Mammary epithelial cell (primary cell): ENCODE measurements at regions of chr2 and their contacts with region 1.

Region 1: DNA sequence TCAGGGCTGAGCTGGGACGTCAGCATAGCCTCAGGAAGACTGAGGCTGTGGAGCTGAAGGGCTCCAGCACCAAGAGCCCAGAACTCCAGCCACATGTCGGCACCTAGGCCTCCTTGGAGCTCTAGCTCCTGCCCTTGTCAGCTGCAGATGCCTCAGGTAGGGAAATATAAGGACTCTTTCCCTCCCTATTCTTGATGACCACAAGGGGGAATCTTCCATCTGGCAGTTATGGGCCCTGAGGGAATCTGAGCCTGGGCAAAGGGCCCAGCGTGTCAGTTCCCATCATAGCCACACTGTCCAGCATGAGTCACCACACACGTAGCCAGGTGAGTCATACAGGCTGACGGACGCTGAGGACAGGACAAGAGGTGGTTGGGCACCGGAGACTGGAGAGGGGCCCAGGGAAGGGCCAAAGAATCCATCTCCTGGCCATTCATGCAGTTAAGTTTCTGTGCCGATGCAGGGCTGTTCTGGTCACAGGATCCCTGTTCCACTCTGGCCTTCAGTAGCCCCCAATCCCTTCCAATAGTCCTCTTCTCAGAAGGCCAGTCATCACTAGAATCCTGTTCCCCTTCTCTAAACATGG is 1.8 kb downstream of the MPV17 start:
- DNase-seq: peak; percentile 98
- H3K4me3 ChIP-seq: peak overlapping the region in 2 of 3 experiments; percentile 27 to 80
- H3K27ac ChIP-seq: peak overlapping the region; percentile 94
- H3K4me1 ChIP-seq: peaks cover 21% of the 10 kb centered on the region
- H3K27me3 ChIP-seq: no peaks in the 10 kb centered on the region
- CTCF ChIP-seq: peak; percentile 58 to 81

Region 2: DNA sequence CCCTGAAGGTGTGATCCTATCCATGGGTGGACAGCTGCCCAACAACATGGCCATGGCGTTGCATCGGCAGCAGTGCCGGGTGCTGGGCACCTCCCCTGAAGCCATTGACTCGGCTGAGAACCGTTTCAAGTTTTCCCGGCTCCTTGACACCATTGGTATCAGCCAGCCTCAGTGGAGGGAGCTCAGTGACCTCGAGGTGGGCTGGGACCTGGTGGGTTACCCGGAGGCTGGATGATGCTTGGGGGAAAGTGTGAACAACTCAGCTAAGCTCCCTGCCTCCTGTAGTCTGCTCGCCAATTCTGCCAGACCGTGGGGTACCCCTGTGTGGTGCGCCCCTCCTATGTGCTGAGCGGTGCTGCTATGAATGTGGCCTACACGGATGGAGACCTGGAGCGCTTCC is 87.7 kb before region 1 on chr2:
- CTCF ChIA-PET with region 1: no interaction called
- dilution Hi-C with region 1: loop called (anchors 5 kb)
- in situ Hi-C with region 1: no loop called
- intact Hi-C with region 1: no loop called
- DNase-seq: no peak
- H3K4me3 ChIP-seq: no peak overlapping the region
- H3K27ac ChIP-seq: no peak overlapping the region
- H3K4me1 ChIP-seq: no peaks in the 10 kb centered on the region
- H3K27me3 ChIP-seq: no peaks in the 10 kb centered on the region
- CTCF ChIP-seq: no peak

Region 3: DNA sequence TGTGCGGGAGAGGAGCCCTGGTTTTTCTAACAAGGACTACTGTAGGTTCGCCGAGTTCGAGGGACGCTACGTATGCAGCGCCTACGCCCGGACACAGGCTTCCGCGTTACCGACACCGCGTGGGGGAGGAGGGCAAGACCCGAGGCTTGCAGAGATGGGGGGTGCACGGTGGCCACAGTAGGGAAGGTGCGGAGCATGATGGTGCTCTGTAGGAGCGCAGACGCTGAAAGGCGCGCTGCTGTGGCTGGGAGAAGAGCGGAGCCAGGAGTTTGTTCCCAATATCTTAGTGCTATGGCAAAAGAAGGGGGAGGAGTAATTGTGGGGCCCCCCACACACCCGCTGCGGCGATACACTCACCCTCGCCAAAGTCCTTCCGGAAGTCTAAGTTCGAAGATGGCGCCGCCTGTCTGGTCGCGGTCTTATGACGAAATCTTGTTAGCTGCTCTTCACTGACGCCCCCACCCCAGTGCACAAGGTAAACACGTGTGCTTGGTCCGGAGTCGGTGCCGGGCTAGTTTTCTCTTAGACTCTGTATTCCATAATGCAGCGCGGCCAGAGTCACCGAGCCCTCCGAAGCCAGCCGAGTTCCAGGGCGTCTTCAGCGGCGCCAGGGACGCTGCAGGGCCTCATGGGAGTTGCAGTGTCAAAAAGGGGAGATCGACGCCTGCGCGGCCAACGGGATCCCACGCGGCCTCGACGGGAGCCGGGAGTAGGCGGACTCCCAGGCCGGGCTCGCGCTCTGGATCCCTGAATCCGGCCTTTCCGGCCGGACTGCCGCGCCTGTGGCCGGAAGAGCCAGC is 35.5 kb after region 1 on chr2 and contains the start of gene GTF3C2:
- CTCF ChIA-PET with region 1: no interaction called
- dilution Hi-C with region 1: no loop called
- in situ Hi-C with region 1: no loop called
- intact Hi-C with region 1: loop called (anchors 1 kb)
- DNase-seq: peak; percentile 98
- H3K4me3 ChIP-seq: peak within 1 kb of the TSS; percentile 74 to 92 (median 89)
- H3K27ac ChIP-seq: peak within 1 kb of the TSS; percentile 88
- H3K4me1 ChIP-seq: peaks cover 16% of the 10 kb centered on the region
- H3K27me3 ChIP-seq: no peaks in the 10 kb centered on the region
- CTCF ChIP-seq: no peak
- total RNA-seq, gene GTF3C2: 26.7 to 55.5 TPM

Region 4: DNA sequence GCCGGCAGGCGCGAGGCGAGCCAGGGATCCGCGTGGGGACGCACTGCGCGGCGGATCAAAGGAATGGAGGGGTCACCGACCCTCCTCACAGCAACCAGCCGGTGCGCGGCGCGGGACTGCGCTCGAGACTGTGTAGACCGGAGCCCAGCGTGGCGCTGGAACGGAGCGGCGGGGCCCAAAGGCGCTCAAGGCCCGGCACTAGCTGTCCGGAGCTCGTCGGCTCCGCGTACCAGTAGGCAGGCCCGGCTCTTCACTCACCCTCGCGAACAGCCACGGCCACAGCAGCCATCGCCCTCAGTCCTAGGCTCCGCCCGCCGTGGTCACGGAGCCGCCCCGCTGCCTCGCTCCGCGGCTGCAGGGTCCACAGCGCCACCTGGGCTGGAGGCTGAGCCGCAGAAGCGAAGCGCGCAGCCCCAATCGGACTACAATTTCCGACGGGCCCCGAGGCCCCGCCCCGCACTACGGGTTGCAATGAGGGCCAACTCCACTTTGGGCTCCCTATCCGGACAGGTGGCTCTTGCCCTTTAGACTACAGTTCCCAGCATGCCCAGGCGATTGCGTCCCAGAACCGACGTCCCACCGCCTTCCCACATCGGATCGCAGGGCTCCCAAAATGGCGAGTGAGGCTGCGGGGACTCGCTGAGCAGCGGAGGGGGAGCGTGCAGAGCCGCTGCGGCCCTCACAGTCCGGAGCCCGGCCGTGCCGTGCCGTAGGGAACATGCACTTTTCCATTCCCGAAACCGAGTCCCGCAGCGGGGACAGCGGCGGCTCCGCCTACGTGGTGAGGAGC is 49.2 kb after region 1 on chr2 and contains the starts of genes EIF2B4 and SNX17:
- CTCF ChIA-PET with region 1: no interaction called
- dilution Hi-C with region 1: no loop called
- in situ Hi-C with region 1: no loop called
- intact Hi-C with region 1: loop called (anchors 1 kb)
- DNase-seq: peak; percentile 99
- H3K4me3 ChIP-seq: peak within 1 kb of the TSS; percentile 88 to 96 (median 94)
- H3K27ac ChIP-seq: peak within 1 kb of the TSS; percentile 67
- H3K4me1 ChIP-seq: peaks cover 18% of the 10 kb centered on the region
- H3K27me3 ChIP-seq: no peaks in the 10 kb centered on the region
- CTCF ChIP-seq: peak; percentile 55 to 97
- total RNA-seq, gene EIF2B4: 19.8 to 42.3 TPM
- total RNA-seq, gene SNX17: 86.0 to 87.5 TPM

Region 5: GRCh38 chr2:27380626-27381545 is 59.8 kb after region 1 on chr2 and contains the start of gene ZNF513:
- CTCF ChIA-PET with region 1: no interaction called
- dilution Hi-C with region 1: no loop called
- in situ Hi-C with region 1: no loop called
- intact Hi-C with region 1: loop called (anchors 2 kb)
- DNase-seq: peak; percentile 96
- H3K4me3 ChIP-seq: peak within 1 kb of the TSS; percentile 66 to 87 (median 75)
- H3K27ac ChIP-seq: peak within 1 kb of the TSS; percentile 86
- H3K4me1 ChIP-seq: peaks cover 33% of the 10 kb centered on the region
- H3K27me3 ChIP-seq: no peaks in the 10 kb centered on the region
- CTCF ChIP-seq: no peak
- total RNA-seq, gene ZNF513: 10.2 to 14.9 TPM

Region 6: DNA sequence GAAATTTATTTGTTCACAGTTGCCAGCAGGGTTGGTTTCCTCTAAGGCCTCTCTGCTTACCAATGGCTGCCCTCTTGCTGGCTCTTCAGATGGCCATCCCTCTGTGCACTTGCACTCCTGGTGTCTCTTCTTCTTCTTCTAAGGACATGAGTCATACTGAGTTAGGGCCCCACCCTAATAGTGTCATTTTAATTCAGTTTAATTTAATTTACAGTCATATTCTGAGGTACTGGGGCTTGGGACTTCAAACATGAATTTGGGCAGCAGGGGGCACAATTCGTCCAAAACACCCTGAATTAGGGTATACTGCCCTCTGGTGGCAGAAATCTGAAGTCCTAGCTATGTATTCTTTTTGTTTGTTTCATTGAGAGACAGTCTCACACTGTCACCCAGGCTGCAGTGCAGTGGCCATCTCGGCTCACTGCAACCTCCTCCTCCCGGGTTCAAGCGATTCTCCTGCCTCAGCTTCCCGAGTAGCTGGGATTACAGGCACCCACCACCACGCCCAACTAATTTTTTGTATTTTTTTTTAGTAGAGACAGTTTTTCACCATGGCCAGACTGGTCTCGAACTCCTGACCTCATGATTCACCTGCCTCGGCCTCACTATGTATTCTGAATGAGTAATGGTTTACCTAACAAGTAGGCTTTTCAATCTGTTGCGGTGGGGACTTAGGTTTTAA is 362.5 kb after region 1 on chr2:
- CTCF ChIA-PET with region 1: interaction called, 5 read pairs
- dilution Hi-C with region 1: no loop called
- in situ Hi-C with region 1: no loop called
- intact Hi-C with region 1: loop called (anchors 1 kb)
- DNase-seq: peak; percentile 84
- H3K4me3 ChIP-seq: no peak overlapping the region
- H3K27ac ChIP-seq: peak overlapping the region; percentile 73
- H3K4me1 ChIP-seq: peaks cover 47% of the 10 kb centered on the region
- H3K27me3 ChIP-seq: no peaks in the 10 kb centered on the region
- CTCF ChIP-seq: peak; percentile 93 to 95